Dendritic cell treated with granulocyte-macrophage colony-stimulating factor and Interleukin-4, amounts not matched to agents 40 ng/mL and 50 ng/mL, for 4 days (primary cell): ENCODE measurements at regions of chr10 and their contacts with region 1.

Region 1: DNA sequence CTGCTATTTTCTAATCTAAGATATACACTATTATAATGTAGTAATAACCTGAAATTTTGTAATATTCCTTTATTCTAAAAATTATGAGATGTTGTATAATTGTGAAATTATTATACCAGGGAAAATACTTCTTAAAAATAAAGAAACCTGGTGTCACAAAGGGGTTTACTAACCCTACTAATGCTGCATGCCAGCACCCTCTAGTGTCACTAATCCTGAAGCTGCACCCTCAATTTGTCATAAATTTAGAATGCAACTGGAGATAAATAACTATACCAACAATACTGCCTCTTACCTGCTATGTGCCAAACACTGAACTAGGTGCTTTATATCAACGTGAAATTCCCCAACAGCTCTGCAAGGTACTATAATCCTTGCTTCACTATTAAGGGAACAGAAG is 30.8 kb downstream of the TM9SF3 start:
- H3K4me3 Mint-ChIP-seq: no peak overlapping the region
- H3K27ac Mint-ChIP-seq: no peak overlapping the region
- H3K4me1 Mint-ChIP-seq: no peaks in the 10 kb centered on the region
- H3K27me3 Mint-ChIP-seq: no peaks in the 10 kb centered on the region

Region 2: GRCh38 chr10:96188916-96189315 is 367.1 kb before region 1 on chr10:
- intact Hi-C with region 1: no loop called
- H3K4me3 Mint-ChIP-seq: no peak overlapping the region
- H3K27ac Mint-ChIP-seq: no peak overlapping the region
- H3K4me1 Mint-ChIP-seq: no peaks in the 10 kb centered on the region
- H3K27me3 Mint-ChIP-seq: peaks cover 2% of the 10 kb centered on the region

Region 3: GRCh38 chr10:96374985-96375830 is 180.8 kb before region 1 on chr10:
- intact Hi-C with region 1: loop called (anchors 10 kb)
- H3K4me3 Mint-ChIP-seq: peak overlapping the region; percentile 73
- H3K27ac Mint-ChIP-seq: no peak overlapping the region
- H3K4me1 Mint-ChIP-seq: peaks cover 14% of the 10 kb centered on the region
- H3K27me3 Mint-ChIP-seq: peaks cover 23% of the 10 kb centered on the region

Region 4: GRCh38 chr10:96541921-96542320 is 14.1 kb before region 1 on chr10:
- intact Hi-C with region 1: no loop called
- H3K4me3 Mint-ChIP-seq: no peak overlapping the region
- H3K27ac Mint-ChIP-seq: peak overlapping the region; percentile 8
- H3K4me1 Mint-ChIP-seq: no peaks in the 10 kb centered on the region
- H3K27me3 Mint-ChIP-seq: no peaks in the 10 kb centered on the region

Region 5: DNA sequence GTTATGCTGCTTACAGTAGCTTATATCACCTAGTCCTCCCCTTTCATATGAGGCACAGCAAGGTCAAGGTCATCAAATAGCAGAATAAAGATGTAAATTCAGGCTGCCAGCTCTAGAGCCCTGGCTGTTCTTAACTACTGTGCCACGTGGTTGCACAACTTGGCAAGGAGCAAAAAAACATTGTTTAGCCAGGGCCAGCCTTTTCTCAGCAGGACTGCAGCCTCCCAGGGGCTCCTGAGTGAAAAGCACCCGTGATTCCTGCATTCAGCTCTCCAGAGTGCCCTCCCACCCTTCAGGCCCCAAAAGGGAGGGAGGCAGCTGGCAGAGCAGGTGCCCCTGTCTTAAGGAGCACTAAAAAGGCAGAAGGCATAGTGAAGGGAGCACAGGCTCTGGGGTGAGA is 62.6 kb after region 1 on chr10:
- intact Hi-C with region 1: no loop called
- H3K4me3 Mint-ChIP-seq: no peak overlapping the region
- H3K27ac Mint-ChIP-seq: no peak overlapping the region
- H3K4me1 Mint-ChIP-seq: no peaks in the 10 kb centered on the region
- H3K27me3 Mint-ChIP-seq: no peaks in the 10 kb centered on the region

Region 6: GRCh38 chr10:96651998-96652431 is 96.0 kb after region 1 on chr10:
- intact Hi-C with region 1: no loop called
- H3K4me3 Mint-ChIP-seq: no peak overlapping the region
- H3K27ac Mint-ChIP-seq: peak overlapping the region; percentile 74
- H3K4me1 Mint-ChIP-seq: peaks cover 76% of the 10 kb centered on the region
- H3K27me3 Mint-ChIP-seq: no peaks in the 10 kb centered on the region